Esophagus squamous epithelium (tissue), 5 donors: ENCODE measurements at regions of chr19 and their contacts with region 1.

Region 1: DNA sequence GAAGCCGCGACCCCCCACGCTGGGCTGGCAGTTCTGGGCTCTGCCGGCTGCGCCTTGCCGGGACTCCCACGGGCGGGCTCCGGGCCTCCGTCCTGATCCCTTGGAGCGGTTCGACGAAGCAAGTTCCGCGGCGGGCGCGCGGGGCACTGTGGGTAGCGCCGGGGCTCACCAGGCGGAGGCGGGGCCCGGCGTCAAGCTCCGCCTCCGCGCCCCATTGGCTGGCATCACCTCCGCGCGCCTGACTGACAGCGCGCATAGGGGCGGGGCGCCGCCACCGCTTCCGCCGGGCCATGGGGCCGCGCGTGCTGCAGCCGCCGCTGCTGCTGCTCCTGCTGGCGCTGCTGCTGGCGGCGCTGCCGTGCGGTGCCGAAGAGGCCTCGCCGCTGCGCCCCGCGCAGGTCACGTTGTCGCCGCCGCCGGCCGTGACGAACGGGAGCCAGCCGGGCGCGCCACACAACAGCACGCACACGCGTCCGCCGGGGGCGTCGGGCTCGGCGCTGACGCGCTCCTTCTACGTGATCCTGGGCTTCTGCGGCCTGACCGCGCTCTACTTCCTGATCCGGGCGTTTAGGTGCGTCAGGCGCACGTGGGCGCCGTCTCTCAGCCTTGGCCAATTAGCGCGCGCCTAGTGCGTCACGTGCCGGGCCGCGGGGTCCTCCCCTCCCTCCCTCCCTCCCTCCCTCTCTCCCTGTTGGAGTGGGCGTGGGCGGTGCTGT is at the start of gene FAM174C:
- DNase-seq: peak; percentile 90
- H3K4me3 ChIP-seq: peak within 1 kb of the TSS; percentile 49 to 86 (median 70)
- H3K27ac ChIP-seq: peak within 1 kb of the TSS; percentile 94 to 99 (median 98)
- H3K4me1 ChIP-seq: peaks cover 51 to 72% (median 57%) of the 10 kb centered on the region in 3 donors
- H3K27me3 ChIP-seq: no peaks in the 10 kb centered on the region
- CTCF ChIP-seq: peak in 3 of 6 experiments; percentile 8 to 21 (median 13)
- POLR2A ChIP-seq: peak in 3 of 4 donors; percentile 54 to 83 (median 77)
- total RNA-seq, gene FAM174C: 31.5 to 69.8 (median 50.5) TPM

Region 2: GRCh38 chr19:1406774-1407499 is 131.5 kb after region 1 on chr19:
- intact Hi-C with region 1: loop called (anchors 10 kb)
- DNase-seq: peak; percentile 83
- H3K4me3 ChIP-seq: peak overlapping the region; percentile 92 to 99 (median 96)
- H3K27ac ChIP-seq: peak overlapping the region; percentile 85 to 100 (median 96)
- H3K4me1 ChIP-seq: peaks cover 46 to 71% (median 47%) of the 10 kb centered on the region in 3 donors
- H3K27me3 ChIP-seq: no peaks in the 10 kb centered on the region
- CTCF ChIP-seq: peak; percentile 19 to 42 (median 27)
- POLR2A ChIP-seq: peak in 1 of 4 donors; percentile 30

Region 3: GRCh38 chr19:1455336-1456120 is 180.1 kb after region 1 on chr19:
- intact Hi-C with region 1: loop called (anchors 10 kb)
- DNase-seq: no peak
- H3K4me3 ChIP-seq: no peak overlapping the region
- H3K27ac ChIP-seq: peak overlapping the region in 1 of 4 donors; percentile 72
- H3K4me1 ChIP-seq: peaks cover 19 to 51% (median 20%) of the 10 kb centered on the region in 3 donors
- H3K27me3 ChIP-seq: peaks cover 28 to 94% (median 36%) of the 10 kb centered on the region in 4 donors
- CTCF ChIP-seq: no peak
- POLR2A ChIP-seq: no peak